GM12878 (cell line): ENCODE measurements at regions of chr3 and their contacts with region 1.

Region 1: DNA sequence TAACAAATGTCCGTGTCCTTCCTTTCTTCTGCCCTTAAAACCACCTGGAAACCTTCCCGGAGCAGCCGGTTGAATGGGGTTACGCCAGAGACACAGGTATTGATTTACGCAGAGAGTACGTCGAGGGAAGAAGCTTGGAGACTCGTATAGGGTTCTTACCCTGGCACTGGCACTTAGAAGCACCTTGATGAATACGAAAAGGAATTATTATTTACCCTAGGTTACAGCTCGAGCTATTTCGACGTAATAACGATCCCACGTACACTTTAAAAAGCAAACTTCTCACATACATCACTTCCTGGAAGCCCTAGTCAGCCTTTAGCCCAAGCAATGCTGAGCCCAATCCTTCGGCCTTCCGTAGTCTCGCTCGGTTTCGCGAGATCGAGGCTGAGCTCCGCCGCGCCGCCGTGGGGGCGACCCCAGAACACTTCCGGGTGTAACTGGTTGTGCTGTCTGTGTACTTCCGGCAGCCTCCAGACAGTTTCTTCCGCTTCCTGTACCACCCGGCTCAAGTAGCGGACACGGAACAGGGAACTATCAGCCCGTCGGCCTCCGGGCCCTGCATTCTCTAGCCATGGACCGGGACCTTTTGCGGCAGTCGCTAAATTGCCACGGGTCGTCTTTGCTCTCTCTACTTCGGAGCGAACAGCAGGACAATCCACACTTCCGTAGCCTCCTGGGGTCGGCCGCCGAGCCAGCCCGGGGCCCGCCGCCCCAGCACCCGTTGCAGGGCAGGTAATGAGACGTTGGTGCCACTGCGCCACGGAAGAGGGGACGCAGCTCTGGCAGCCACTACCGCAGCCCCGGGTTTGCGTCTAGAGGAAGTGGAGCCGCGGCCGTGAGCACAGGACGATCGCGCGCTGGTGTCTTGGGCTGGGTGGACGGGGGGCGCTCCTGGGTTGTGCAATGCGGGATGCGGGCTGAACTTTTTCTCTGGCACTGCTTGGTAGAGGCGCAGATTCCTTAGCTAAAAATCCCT is at the start of gene TTC14:
- DNase-seq: peak; percentile 81
- ATAC-seq: peak; percentile 95
- H3K4me3 ChIP-seq: peak within 1 kb of the TSS; percentile 90
- H3K27ac ChIP-seq: peak within 1 kb of the TSS; percentile 67
- H3K4me1 ChIP-seq: no peaks in the 10 kb centered on the region
- H3K27me3 ChIP-seq: no peaks in the 10 kb centered on the region
- CTCF ChIP-seq: peak in 1 of 3 experiments; percentile 45; a peak in 2 of 6 replicates
- EP300 ChIP-seq: no peak
- POLR2A ChIP-seq: peak; percentile 93
- RAD21 ChIP-seq: peak; percentile 34
- polyA plus RNA-seq, gene TTC14: 14.0 to 22.4 TPM

Region 2: DNA sequence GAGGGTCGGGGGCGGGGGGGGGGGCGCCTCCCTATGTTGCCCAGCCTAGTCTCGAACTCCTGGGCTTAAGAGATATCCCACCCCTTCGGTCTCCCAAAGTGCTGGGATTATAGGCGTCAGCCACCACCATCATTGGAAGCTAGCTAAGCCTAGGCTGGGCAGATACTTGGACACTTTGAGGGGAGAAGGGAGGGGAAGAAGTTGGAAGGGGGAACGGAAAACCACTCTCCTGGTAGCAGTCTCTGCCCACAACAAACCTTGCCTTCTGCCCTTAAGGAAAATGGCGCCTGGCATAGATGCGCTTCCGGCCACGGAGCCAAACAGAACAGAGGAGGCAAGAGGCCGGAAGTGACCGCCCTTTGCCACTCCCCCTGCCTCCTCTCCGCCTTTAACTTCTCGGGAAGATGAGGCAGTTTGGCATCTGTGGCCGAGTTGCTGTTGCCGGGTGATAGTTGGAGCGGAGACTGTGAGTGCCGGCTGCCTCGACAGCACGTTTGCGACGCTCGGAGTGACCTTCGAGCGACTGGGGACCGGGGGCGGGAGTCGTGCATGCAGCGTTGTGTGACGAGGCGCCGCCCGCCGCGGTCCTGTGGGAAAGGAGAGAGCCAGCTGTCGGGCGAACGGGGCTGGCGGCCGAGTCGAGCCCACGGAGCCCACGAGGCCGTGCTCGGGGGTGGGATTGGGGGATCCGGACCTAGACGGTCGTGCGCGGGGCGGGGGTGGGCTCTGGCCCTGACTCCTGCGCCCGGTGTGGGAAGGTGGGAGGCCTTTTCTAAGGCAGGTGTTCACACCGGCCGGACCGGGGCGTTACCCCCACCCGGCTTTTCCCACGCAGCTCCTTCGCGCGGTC is 1254.4 kb before region 1 on chr3 and contains the start of gene MFN1:
- CTCF ChIA-PET with region 1: no interaction called
- POLR2A ChIA-PET with region 1: no interaction called
- RAD21 ChIA-PET with region 1: no interaction called
- SMC1A ChIA-PET with region 1: no interaction called
- in situ Hi-C with region 1: loop called (anchors 25 kb)
- intact Hi-C with region 1: no loop called
- DNase-seq: peak; percentile 87
- ATAC-seq: peak; percentile 95
- H3K4me3 ChIP-seq: peak within 1 kb of the TSS; percentile 71
- H3K27ac ChIP-seq: peak within 1 kb of the TSS; percentile 96
- H3K4me1 ChIP-seq: no peaks in the 10 kb centered on the region; the same call in 1 of the 2 replicates
- H3K27me3 ChIP-seq: no peaks in the 10 kb centered on the region
- CTCF ChIP-seq: no peak
- EP300 ChIP-seq: no peak
- POLR2A ChIP-seq: peak; percentile 98
- RAD21 ChIP-seq: no peak
- polyA plus RNA-seq, gene MFN1: 14.4 to 15.9 TPM

Region 3: DNA sequence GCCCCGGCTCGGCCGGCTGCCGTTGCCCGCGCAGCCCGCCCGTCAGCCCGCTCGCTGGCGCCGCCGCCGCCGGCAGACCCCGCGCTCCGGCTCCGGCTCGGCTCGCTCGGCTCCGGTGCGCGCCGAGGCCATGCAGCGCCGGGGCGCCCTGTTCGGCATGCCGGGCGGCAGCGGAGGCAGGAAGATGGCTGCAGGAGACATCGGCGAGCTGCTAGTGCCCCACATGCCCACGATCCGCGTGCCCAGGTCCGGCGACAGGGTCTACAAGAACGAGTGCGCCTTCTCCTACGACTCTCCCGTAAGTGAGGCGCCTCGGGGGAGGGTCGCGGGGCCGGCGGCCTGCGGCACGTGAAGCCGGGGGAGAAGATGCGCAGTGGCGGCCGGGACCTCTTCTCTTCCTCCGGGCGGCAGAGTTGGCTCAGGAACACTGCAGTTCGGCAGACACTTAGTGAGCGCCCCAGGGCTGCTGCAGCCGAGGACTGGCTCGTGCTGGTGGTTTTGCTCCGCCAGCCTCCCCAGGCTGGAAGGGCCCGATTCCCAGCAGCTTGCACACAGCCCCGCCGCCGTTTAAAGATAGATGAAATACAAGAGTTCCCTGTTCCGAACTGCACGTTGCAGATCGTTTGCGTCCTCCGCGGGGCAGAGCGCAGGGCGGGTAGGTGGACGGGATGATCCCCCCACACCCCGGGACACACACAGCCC is 948.7 kb before region 1 on chr3:
- CTCF ChIA-PET with region 1: no interaction called
- POLR2A ChIA-PET with region 1: no interaction called
- RAD21 ChIA-PET with region 1: interaction called, 4 read pairs
- SMC1A ChIA-PET with region 1: no interaction called
- in situ Hi-C with region 1: no loop called
- intact Hi-C with region 1: loop called (anchors 5 kb)
- DNase-seq: no peak
- ATAC-seq: peak; percentile 69
- H3K4me3 ChIP-seq: peak overlapping the region; percentile 99
- H3K27ac ChIP-seq: peak overlapping the region; percentile 73
- H3K4me1 ChIP-seq: no peaks in the 10 kb centered on the region
- H3K27me3 ChIP-seq: no peaks in the 10 kb centered on the region
- CTCF ChIP-seq: peak in 2 of 3 experiments; percentile 8 to 36; a peak in 3 of 6 replicates
- EP300 ChIP-seq: no peak
- POLR2A ChIP-seq: peak; percentile 79
- RAD21 ChIP-seq: no peak; the same call in 1 of the 2 replicates

Region 4: DNA sequence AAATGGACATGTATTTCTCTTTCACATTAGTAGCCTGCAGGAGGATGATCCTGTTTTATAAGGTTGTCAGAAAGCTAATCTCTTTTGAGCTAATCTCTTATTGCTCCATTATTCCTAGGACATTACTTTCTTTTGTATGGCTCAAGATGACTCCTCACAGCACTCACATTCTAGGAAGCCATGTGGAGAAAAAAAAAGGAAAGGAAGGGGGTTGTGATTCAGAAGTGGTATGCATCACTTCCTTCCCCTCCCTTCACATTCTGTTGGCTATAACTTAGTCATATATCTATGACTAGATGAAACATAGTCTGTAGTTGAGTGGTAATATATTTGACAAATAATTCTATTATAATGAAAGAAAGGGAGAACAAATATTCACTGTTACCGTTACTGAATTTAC is 168.8 kb before region 1 on chr3:
- CTCF ChIA-PET with region 1: no interaction called
- POLR2A ChIA-PET with region 1: no interaction called
- RAD21 ChIA-PET with region 1: no interaction called
- SMC1A ChIA-PET with region 1: no interaction called
- in situ Hi-C with region 1: no loop called
- intact Hi-C with region 1: no loop called
- DNase-seq: no peak
- ATAC-seq: no peak
- H3K4me3 ChIP-seq: no peak overlapping the region
- H3K27ac ChIP-seq: no peak overlapping the region
- H3K4me1 ChIP-seq: no peaks in the 10 kb centered on the region
- H3K27me3 ChIP-seq: no peaks in the 10 kb centered on the region
- CTCF ChIP-seq: no peak
- EP300 ChIP-seq: no peak
- POLR2A ChIP-seq: no peak
- RAD21 ChIP-seq: no peak

Region 5: DNA sequence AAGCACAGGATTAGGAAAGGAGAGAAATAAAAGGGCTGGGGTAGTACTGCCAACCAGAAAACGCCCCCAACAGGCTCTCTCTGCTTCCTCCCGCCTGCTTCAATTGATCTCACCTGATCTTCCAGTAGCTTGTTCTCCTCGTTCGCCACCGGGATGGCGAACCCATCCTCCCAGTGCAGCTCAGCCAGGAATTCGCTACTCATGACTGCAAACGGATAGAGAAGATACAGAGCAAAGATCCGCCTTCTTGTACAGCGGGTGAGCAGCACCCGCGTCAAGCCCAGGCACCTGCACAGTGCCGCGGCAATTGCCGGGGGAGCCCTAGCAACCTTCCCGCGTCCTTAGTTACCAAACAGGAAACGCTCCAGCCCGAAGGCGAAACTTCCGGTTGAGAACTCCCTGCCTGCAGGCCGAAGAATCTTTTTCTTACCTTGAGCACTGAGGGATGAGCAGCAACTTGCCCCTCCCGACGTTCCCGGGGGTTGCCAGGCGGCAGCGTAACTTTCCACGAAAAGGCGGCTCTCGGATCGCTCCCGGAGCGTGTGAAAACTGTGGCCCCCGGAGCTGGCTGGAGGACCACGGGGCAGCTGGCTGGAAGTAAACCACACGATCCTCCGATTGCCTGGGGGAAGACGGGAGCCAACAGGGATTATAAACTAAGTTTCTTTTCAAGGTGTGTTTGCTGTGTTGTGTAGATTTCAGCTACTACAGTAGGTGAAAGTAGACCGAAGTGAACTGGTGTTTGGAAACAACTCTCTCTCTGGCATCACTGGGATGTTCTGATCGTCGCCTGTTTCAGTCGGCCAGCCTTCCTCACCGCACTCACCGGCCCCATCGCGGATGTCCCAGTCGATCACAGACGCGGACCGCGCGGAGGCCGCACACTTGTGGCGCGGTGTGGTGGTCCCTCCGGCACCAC is 77.5 kb after region 1 on chr3 and contains the start of gene CCDC39:
- CTCF ChIA-PET with region 1: interaction called, 11 read pairs
- POLR2A ChIA-PET with region 1: no interaction called
- RAD21 ChIA-PET with region 1: interaction called, 5 read pairs
- SMC1A ChIA-PET with region 1: interaction called, 4 read pairs
- in situ Hi-C with region 1: no loop called
- intact Hi-C with region 1: loop called (anchors 5 kb)
- DNase-seq: peak; percentile 30
- ATAC-seq: peak; percentile 96
- H3K4me3 ChIP-seq: peak within 1 kb of the TSS; percentile 82
- H3K27ac ChIP-seq: no peak within 1 kb of the TSS
- H3K4me1 ChIP-seq: peaks cover 4% of the 10 kb centered on the region; the same call in 1 of the 2 replicates
- H3K27me3 ChIP-seq: no peaks in the 10 kb centered on the region
- CTCF ChIP-seq: no peak
- EP300 ChIP-seq: no peak
- POLR2A ChIP-seq: no peak
- RAD21 ChIP-seq: no peak
- polyA plus RNA-seq, gene CCDC39: 0.32 to 0.38 TPM